Right ventricle myocardium superior (tissue), 1 donor: ENCODE measurements at regions of chr12 and their contacts with region 1.

Region 1: GRCh38 chr12:115910057-115910456 is 367.4 kb downstream of the MED13L start:
- DNase-seq: no peak
- ATAC-seq: no peak

Region 2: GRCh38 chr12:115794659-115795081 is 115.4 kb before region 1 on chr12:
- intact Hi-C with region 1: loop called (anchors 5 kb)
- DNase-seq: no peak
- ATAC-seq: no peak